ENCODE measurements at regions of chr9 and their contacts with region 1.

Region 1: DNA sequence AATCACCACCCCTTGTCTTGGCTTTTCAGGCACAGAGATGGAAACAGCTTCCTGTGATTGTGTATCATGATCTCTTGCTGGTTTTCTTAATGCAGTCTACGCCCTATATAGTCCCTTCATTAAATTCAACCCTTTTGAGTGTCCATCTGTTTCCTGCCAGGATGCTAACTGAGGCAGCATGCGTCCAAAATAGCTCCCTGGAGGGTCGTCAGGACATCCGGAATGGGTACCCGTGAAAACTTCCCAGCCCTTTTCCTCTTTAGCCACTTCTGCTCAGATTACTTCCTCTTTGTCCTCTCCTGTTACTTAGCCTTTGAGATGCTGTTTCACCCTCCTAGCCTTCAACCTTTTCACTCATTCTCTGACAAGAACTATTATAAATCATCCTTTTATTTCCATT is 79.8 kb upstream of the KLF9 start:
- DNase-seq: peak; percentile 95

Region 2: GRCh38 chr9:70258692-70259511 is 235.3 kb before region 1 on chr9 and contains the start of gene SMC5:
- in situ Hi-C with region 1: no loop called
- DNase-seq: peak; percentile 92

Region 3: GRCh38 chr9:70297141-70297540 is 197.1 kb before region 1 on chr9:
- in situ Hi-C with region 1: no loop called
- DNase-seq: no peak

Region 4: DNA sequence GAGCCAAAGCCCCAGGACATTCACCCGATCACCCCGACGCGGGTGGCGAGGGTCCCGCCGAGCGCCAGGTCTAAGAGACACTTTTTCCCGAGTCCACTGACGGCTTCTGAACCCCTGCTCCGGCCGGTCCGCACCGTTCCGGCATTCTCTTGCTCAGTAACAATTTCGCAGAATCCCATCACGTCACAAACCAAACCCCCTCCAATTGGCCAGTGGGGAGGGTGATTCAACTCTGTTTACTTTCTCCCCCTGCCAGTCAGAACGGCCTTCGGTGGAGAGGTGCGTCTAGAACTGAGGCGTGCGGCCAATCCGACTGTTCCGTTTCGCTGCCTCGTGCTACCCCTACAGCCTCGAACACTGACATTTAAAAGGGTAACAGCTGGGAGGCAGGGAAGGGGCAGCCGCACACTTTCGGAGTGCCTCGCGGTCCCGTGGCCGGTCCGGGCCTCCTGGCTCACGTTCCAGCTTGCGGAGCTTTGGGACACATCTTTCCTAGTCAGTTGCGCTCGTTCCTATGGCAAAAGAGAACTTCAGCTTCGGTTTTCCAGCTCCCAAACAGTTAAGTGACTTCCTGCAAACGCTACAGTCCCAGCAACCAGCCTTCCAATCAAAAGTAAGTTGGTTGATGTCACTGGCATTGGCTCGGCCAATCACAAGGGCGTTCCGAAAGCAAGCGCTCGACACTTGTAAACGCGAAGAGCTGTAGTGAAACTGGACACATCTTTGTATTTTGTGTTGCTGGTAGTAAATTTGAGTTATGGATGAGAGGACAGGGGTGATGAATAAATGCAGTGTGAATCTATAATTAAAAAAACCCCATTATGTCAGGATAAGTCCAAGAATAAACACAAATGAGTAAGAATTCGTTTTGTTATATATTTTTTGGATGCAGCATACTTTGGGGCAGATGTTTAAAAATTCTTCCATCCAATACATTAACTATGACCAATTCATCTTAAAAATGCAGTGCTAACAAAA is 80.1 kb before region 1 on chr9 and contains the start of gene KLF9:
- in situ Hi-C with region 1: loop called (anchors 10 kb)
- DNase-seq: peak; percentile 98

Measured in KBM-7 (cell line).